Esophagus muscularis mucosa (tissue), 4 donors: ENCODE measurements at regions of chr11 and their contacts with region 1.

Region 1: DNA sequence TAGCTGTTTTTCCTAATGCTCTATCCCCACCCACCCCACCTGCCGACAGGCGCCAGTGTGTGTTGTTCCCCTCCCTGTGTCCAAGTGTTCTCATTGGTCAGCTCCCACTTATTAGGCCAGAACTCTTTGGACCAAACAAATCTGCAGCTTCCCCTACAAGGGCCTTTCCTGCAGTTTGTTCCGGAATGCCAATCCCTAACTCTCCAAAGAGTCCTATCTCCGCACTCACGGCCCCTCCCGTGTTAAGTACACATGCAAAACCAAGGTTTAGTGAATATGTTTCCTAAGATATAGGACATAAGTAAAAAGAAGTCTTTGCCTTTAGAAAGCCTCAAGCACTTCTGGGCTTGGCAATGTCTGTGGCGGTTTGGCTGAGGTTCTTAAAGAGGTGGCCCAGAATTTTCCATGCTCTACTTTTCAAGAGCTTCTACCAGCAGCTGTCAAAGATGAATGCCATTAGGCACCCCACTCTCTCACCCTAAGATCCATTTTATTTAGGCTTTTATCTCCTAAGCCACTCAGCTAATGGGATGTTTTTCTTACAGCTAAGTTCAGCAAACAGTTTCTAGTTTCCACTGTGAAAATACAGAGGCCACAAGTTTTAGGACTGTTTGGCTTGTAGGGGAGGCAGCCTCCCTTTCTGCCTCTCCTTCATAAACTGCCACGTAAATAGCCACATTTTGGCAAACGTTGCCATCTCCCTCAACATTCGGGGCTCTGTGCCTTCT is 1.6 kb downstream of the CD59 start:
- DNase-seq: no peak
- H3K4me3 ChIP-seq: peak overlapping the region; percentile 81 to 93 (median 87)
- H3K27ac ChIP-seq: peak overlapping the region; percentile 93 to 95 (median 94)
- H3K4me1 ChIP-seq: peaks cover 41 to 68% (median 67%) of the 10 kb centered on the region in 4 donors
- H3K27me3 ChIP-seq: no peaks in the 10 kb centered on the region
- CTCF ChIP-seq: no peak
- EP300 ChIP-seq: no peak
- POLR2A ChIP-seq: no peak

Region 2: DNA sequence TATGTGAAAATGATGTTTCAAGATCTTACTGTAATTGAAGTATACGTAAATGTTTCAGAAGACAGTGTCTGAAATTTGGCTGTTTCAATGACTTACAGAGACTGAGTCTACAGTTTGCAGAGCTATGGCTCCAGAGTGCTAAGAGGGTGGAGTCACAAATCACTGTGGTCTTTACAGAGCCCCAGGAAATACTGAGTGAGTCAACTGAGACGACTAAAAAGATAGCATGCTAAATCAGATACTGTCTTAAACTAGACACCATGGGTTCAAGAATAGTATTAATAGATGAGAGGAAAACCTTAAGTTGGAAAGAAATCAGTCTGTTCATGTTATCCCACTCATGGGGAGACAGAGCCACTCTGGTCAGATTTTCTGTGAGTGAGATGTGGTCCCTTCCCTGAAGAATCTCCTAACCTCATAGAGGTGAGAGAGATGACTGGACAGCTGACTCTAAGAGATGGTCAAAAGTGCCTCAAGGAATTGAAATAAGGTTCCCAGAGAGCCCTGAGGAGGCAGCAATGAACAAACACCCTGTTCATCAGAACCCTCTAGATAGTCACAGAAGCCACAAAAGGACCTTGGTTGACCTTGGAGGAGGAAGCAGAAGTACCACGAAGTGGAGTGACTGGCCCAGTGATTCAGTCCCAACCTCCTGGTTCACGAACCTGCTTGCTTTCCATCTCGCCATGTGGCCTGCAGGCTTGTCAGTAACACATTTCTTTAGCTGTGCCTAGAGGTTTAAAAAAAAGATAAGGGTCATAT is 64.2 kb before region 1 on chr11:
- intact Hi-C with region 1: no loop called
- DNase-seq: no peak
- H3K4me3 ChIP-seq: no peak overlapping the region
- H3K27ac ChIP-seq: no peak overlapping the region
- H3K4me1 ChIP-seq: no peaks in the 10 kb centered on the region
- H3K27me3 ChIP-seq: peaks cover 0 to 7% (median 0%) of the 10 kb centered on the region in 4 donors
- CTCF ChIP-seq: no peak
- EP300 ChIP-seq: no peak
- POLR2A ChIP-seq: no peak

Region 3: GRCh38 chr11:33699515-33700424 is 34.8 kb before region 1 on chr11:
- intact Hi-C with region 1: loop called (anchors 5 kb)
- DNase-seq: no peak
- H3K4me3 ChIP-seq: peak overlapping the region; percentile 61 to 67 (median 62)
- H3K27ac ChIP-seq: peak overlapping the region; percentile 67 to 79 (median 79)
- H3K4me1 ChIP-seq: peaks cover 55 to 62% (median 58%) of the 10 kb centered on the region in 4 donors
- H3K27me3 ChIP-seq: no peaks in the 10 kb centered on the region
- CTCF ChIP-seq: no peak
- EP300 ChIP-seq: no peak
- POLR2A ChIP-seq: no peak